ENCODE measurements at regions of chr3 and their contacts with region 1.

Region 1: DNA sequence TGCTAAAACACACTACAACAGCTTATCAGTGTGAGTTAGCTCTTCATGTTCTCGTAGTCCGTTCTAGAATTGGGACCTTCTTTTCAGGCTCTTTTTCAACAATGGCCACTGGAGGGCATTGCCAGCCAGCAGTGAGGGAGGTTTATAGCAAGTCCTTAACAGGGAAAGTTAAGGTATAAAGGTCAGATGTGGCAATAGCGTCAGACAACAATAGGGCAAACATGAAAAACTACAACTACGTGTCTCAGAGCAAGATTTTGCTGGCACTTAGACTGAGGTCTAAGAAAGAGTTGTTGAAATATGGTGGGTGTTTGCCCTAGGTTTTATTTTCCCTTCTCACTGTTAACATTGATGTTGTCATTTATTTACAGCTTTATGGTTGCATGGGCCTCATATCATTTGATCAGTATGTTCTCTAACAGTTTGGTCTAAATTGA is 161.4 kb downstream of the GMNC start:
- H3K4me3 Mint-ChIP-seq: no peak overlapping the region
- H3K27ac Mint-ChIP-seq: no peak overlapping the region
- H3K4me1 Mint-ChIP-seq: peaks cover 12% of the 10 kb centered on the region
- H3K27me3 Mint-ChIP-seq: peaks cover 1% of the 10 kb centered on the region

Region 2: DNA sequence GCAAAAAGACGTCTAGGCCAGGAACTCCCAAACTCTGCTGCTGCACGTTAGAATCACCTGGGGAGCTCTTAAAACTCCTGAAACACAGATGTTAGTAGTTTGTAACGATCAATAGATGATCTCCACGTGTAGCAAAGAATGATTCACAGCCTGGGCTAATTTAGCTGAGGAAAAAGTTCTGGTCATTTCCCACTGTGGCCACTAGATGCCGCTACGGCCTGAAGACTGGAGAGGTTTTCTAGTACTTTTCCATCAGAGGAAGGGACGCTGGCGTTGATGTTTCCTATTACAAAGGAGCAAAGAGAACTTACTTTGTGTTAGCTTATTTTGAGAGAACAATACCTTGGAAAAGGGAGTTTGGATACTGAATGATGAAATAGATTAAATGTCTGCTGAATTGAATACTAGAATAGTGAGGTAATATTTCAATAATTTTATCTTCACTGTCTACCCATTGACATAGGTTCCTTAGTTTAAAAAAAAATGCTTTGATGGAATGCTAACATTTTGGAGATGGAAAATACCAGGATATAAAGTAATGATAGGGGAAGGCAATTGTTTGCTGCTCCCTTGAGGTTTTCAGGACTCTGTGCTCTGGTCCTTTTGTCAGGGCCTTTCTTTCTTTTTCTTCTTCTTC is 739.5 kb before region 1 on chr3:
- intact Hi-C with region 1: loop called (anchors 10 kb)
- H3K4me3 Mint-ChIP-seq: no peak overlapping the region
- H3K27ac Mint-ChIP-seq: no peak overlapping the region
- H3K4me1 Mint-ChIP-seq: no peaks in the 10 kb centered on the region
- H3K27me3 Mint-ChIP-seq: peaks cover 10% of the 10 kb centered on the region

Region 3: DNA sequence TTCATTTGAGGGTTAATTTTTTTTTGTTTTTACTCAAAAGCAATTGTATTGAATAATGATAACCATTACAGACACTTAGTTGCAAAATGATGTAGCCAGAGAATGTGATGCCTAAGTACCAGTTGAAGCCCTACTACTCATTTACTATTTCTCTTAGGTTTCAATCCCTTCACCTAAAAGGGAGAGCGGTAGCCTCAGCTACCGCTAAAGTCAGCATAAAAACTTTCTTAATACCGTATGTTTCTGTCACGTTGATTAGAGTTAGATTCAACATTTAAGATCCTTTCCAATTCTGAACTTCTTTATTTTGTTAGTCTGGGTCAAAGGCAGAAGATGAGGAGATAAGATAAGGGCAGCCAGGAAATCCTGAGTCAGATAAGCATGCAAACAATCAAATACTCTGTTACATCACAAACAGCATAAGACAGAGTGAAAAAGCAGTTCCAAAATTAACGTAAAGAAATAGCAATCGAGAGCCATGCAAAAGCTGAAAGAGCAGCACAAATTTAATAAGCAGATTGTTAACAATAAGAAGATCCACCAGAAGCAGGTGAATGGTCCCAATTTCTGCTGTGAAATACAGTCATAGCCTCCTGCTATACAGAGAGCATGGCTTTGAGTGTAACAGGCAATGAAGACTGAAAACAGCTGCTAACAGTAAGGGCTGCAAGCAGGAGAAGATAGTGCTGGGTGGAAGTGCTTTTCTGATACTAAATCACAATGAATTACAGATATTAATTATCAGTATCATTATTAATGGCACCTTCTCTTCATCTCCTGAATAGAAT is 254.4 kb before region 1 on chr3:
- intact Hi-C with region 1: loop called (anchors 5 kb)
- H3K4me3 Mint-ChIP-seq: no peak overlapping the region
- H3K27ac Mint-ChIP-seq: no peak overlapping the region
- H3K4me1 Mint-ChIP-seq: peaks cover 15% of the 10 kb centered on the region
- H3K27me3 Mint-ChIP-seq: no peaks in the 10 kb centered on the region

Region 4: GRCh38 chr3:191070201-191070600 is 369.1 kb after region 1 on chr3:
- intact Hi-C with region 1: no loop called
- H3K4me3 Mint-ChIP-seq: no peak overlapping the region
- H3K27ac Mint-ChIP-seq: no peak overlapping the region
- H3K4me1 Mint-ChIP-seq: no peaks in the 10 kb centered on the region
- H3K27me3 Mint-ChIP-seq: no peaks in the 10 kb centered on the region